Caco-2 (cell line): ENCODE measurements at regions of chr2 and their contacts with region 1.

Region 1: DNA sequence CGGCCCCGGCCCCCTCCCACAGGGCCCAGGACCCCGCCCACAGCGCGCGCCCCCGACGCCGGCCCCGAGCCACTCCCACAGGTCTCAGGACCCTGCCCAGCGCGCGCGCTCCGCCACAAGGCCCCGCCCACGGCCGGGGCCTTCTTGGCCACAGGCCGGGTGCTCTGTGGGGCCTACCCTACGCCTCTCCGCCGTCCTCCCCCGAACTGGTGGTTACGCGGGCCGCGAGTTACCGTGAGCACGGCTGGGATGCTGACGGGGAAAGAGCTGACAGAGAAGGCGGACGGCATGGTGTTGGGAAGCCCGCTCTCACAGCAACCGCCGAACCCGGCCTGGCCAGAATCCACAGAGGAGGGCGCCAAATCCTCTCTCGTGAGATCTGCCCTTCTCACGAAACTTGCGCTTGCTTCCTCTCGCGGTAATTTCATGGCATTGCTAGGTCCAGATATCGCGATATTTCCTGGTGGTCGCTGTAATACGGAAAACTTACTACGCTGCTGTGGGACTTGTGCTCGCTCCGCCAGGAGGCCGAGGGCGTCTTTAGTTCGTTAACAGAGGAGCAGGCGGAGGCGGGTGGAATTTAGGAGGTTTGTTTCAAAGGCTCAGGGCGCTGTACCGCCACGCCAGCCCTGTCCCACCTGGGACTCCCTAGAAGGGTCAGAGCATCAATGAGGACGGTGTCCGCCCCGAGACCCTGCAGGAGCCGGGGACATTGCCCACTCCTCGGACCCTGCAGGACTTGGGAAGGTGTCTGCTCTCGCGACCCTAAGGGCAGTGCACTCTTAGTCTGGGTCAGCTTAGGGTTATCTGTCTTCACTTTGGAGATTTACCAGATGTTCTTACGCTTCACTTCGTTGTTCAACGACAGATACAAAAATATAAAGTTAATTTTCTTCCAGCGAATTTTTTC is at the start of gene TMEM18:
- DNase-seq: peak; percentile 96 to 98
- H3K4me3 ChIP-seq: peak within 1 kb of the TSS; percentile 84
- H3K4me3 Mint-ChIP-seq: peak within 1 kb of the TSS; percentile 85
- H3K27ac Mint-ChIP-seq: peak within 1 kb of the TSS; percentile 97
- H3K4me1 ChIP-seq: peaks cover 6% of the 10 kb centered on the region
- H3K4me1 Mint-ChIP-seq: peaks cover 13% of the 10 kb centered on the region
- H3K27me3 ChIP-seq: no peaks in the 10 kb centered on the region
- H3K27me3 Mint-ChIP-seq: peaks cover 2% of the 10 kb centered on the region
- CTCF ChIP-seq: peak; percentile 15 to 29
- total RNA-seq, gene TMEM18: 16.5 and 22.9 TPM in 2 replicates

Region 2: GRCh38 chr2:264660-265468 is 412.4 kb before region 1 on chr2 and contains the start of gene ACP1:
- CTCF ChIA-PET with region 1: no interaction called
- POLR2A ChIA-PET with region 1: interaction called, 4 read pairs
- intact Hi-C with region 1: loop called (anchors 1 kb)
- DNase-seq: peak; percentile 99 to 100
- H3K4me3 ChIP-seq: peak within 1 kb of the TSS; percentile 96
- H3K4me3 Mint-ChIP-seq: peak within 1 kb of the TSS; percentile 86
- H3K27ac Mint-ChIP-seq: peak within 1 kb of the TSS; percentile 87
- H3K4me1 ChIP-seq: peaks cover 32% of the 10 kb centered on the region
- H3K4me1 Mint-ChIP-seq: peaks cover 29% of the 10 kb centered on the region
- H3K27me3 ChIP-seq: no peaks in the 10 kb centered on the region
- H3K27me3 Mint-ChIP-seq: no peaks in the 10 kb centered on the region
- CTCF ChIP-seq: no peak
- total RNA-seq, gene ACP1: 166 and 193 TPM in 2 replicates

Region 3: DNA sequence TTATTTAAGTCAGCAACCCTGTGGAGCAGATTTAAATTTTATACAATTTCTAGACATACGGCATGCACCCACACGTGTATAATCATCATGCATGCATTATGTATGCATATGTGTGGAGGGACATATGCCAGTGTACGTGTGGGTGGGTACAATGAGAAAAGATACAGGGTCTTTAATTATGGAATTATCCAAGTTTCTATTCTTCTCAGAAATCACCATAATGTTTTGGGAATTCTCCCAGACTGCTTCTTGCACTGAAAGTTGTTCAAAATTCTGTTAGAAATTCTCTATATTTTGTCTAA is 63.8 kb after region 1 on chr2:
- CTCF ChIA-PET with region 1: interaction called, 3 read pairs
- POLR2A ChIA-PET with region 1: no interaction called
- intact Hi-C with region 1: loop called (anchors 2 kb)
- DNase-seq: no peak
- H3K4me3 ChIP-seq: peak overlapping the region; percentile 31
- H3K4me3 Mint-ChIP-seq: peak overlapping the region; percentile 86
- H3K27ac Mint-ChIP-seq: no peak overlapping the region
- H3K4me1 ChIP-seq: 0 out of 2 replicates have a peak, but pooled peaks cover 6% of the 10 kb centered on the region
- H3K4me1 Mint-ChIP-seq: peaks cover 6% of the 10 kb centered on the region
- H3K27me3 ChIP-seq: no peaks in the 10 kb centered on the region
- H3K27me3 Mint-ChIP-seq: peaks cover 17% of the 10 kb centered on the region
- CTCF ChIP-seq: no peak